ENCODE measurements at regions of chr4 and their contacts with region 1.

Region 1: GRCh38 chr4:6343950-6344408 is 74.3 kb downstream of the WFS1 start:
- DNase-seq: no peak
- ATAC-seq: peak; percentile 90
- H3K4me3 ChIP-seq: no peak overlapping the region
- H3K27ac ChIP-seq: no peak overlapping the region
- H3K4me1 ChIP-seq: no peaks in the 10 kb centered on the region
- H3K27me3 ChIP-seq: peaks cover 0 to under 1% of the 10 kb centered on the region in 2 experiments; a peak in 2 of 4 replicates
- CTCF ChIP-seq: peak; percentile 12 to 44 (median 33); a peak in 4 of 6 replicates
- EP300 ChIP-seq: no peak
- POLR2A ChIP-seq: no peak
- RAD21 ChIP-seq: peak; percentile 30; the same call in 1 of the 2 replicates

Region 2: GRCh38 chr4:6461301-6462165 is 117.6 kb after region 1 on chr4:
- CTCF ChIA-PET with region 1: no interaction called
- POLR2A ChIA-PET with region 1: no interaction called
- RAD21 ChIA-PET with region 1: no interaction called
- SMC1A ChIA-PET with region 1: no interaction called
- in situ Hi-C with region 1: no loop called
- intact Hi-C with region 1: no loop called
- DNase-seq: no peak
- ATAC-seq: no peak
- H3K4me3 ChIP-seq: no peak overlapping the region
- H3K27ac ChIP-seq: no peak overlapping the region
- H3K4me1 ChIP-seq: no peaks in the 10 kb centered on the region
- H3K27me3 ChIP-seq: no peaks in the 10 kb centered on the region; a peak in 2 of 4 replicates
- CTCF ChIP-seq: no peak
- EP300 ChIP-seq: no peak
- POLR2A ChIP-seq: no peak
- RAD21 ChIP-seq: no peak

Region 3: GRCh38 chr4:6546681-6547447 is 202.9 kb after region 1 on chr4:
- CTCF ChIA-PET with region 1: interaction called, 7 read pairs
- POLR2A ChIA-PET with region 1: no interaction called
- RAD21 ChIA-PET with region 1: no interaction called
- SMC1A ChIA-PET with region 1: no interaction called
- in situ Hi-C with region 1: no loop called
- intact Hi-C with region 1: loop called (anchors 2 kb)
- DNase-seq: no peak
- ATAC-seq: peak; percentile 83
- H3K4me3 ChIP-seq: no peak overlapping the region
- H3K27ac ChIP-seq: no peak overlapping the region
- H3K4me1 ChIP-seq: no peaks in the 10 kb centered on the region
- H3K27me3 ChIP-seq: no peaks in the 10 kb centered on the region
- CTCF ChIP-seq: peak; percentile 86 to 87 (median 87)
- EP300 ChIP-seq: no peak
- POLR2A ChIP-seq: no peak
- RAD21 ChIP-seq: peak; percentile 62